ENCODE measurements at regions of chr5 and their contacts with region 1.

Region 1: GRCh38 chr5:157563373-157563928 is 12.1 kb downstream of the ADAM19 start:
- DNase-seq: peak in 4 of 5 donors; percentile 41 to 69 (median 50)
- ATAC-seq: peak in 3 of 4 donors; percentile 8 to 68 (median 64)
- H3K4me3 ChIP-seq: no peak overlapping the region
- H3K27ac ChIP-seq: peak overlapping the region in 11 of 12 donors; percentile 29 to 95 (median 85)
- H3K4me1 ChIP-seq: peaks cover 3 to 94% (median 65%) of the 10 kb centered on the region in 12 donors
- H3K27me3 ChIP-seq: no peaks in the 10 kb centered on the region
- CTCF ChIP-seq: no peak
- POLR2A ChIP-seq: no peak

Region 2: GRCh38 chr5:157511651-157512644 is 51.5 kb before region 1 on chr5:
- intact Hi-C with region 1: loop called in 5 of 10 experiments (anchors 2 to 5 kb)
- DNase-seq: peak; percentile 90 to 96 (median 94)
- ATAC-seq: peak; percentile 87 to 96 (median 94)
- H3K4me3 ChIP-seq: peak overlapping the region in 1 of 12 donors; percentile 7
- H3K27ac ChIP-seq: peak overlapping the region in 11 of 12 donors; percentile 46 to 81 (median 73)
- H3K4me1 ChIP-seq: peaks cover 0 to 57% (median 39%) of the 10 kb centered on the region in 12 donors
- H3K27me3 ChIP-seq: no peaks in the 10 kb centered on the region
- CTCF ChIP-seq: no peak
- POLR2A ChIP-seq: no peak

Region 3: DNA sequence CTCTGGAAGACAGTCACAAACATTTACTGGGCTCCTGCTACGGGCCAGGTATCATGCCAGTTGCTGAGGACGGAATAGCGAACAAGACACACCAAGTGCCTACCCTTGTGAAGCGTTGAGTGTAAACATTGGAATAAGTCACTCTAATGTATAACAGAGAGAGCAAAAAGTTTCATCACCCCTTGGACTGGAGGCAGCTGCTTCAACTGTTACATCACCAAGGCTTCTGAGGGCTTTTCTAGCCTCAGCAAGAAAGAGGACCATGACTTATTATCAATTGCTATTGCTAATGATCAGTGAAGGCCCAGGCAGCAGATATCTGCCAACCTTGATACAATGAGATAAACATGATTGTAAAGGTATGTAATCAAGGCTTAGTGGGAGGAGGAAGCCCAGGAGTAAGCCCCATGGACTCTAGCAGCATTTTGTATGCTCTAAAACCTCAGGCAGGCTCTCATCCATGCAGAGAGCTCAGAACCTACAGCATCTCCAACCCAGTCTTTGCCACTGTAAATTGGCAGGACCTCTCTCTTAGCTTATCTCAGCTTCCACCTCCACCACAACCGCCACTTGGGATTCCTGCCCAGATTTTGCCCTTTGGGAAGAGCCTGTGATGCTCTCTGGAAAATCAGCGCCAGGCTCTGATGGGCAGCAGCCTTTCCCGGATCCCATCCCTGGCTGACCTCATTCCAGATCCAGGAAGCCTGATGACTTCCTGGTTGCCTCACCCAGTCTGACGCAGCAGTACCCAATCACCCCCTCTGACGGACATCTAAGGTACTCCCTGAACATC is 42.3 kb before region 1 on chr5:
- intact Hi-C with region 1: loop called in 2 of 10 experiments (anchors 5 kb)
- DNase-seq: peak in 4 of 5 donors; percentile 45 to 92 (median 68)
- ATAC-seq: peak in 3 of 4 donors; percentile 70 to 80 (median 78)
- H3K4me3 ChIP-seq: no peak overlapping the region
- H3K27ac ChIP-seq: peak overlapping the region in 10 of 12 donors; percentile 8 to 69 (median 43)
- H3K4me1 ChIP-seq: peaks cover 0 to 44% (median 28%) of the 10 kb centered on the region in 12 donors
- H3K27me3 ChIP-seq: no peaks in the 10 kb centered on the region
- CTCF ChIP-seq: peak in 3 of 12 donors; percentile 23 to 41 (median 36)
- POLR2A ChIP-seq: no peak